A673 (cell line): ENCODE measurements at regions of chr11 and their contacts with region 1.

Region 1: DNA sequence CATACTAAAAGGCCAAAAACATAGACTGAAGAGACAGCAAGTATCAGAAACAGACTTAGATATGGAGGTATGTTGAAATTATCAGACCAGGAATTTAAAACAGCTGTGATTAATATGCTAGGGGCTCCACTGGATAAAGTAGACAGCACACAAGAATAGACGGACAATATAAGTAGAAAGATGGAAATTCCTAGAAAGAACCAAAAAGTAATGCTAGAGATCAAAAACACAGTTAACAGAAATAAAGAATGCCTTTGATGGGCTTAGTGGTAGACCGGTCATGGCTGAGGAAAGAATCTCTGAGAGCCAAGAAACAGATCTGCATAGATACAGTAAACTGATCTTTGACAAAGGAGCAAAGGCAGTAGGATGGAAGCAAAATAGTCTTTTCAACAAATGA is 250.2 kb downstream of the SWAP70 start:
- DNase-seq: no peak
- H3K4me3 ChIP-seq: no peak overlapping the region
- H3K27ac ChIP-seq: no peak overlapping the region
- H3K4me1 ChIP-seq: no peaks in the 10 kb centered on the region
- H3K27me3 ChIP-seq: no peaks in the 10 kb centered on the region
- CTCF ChIP-seq: no peak

Region 2: DNA sequence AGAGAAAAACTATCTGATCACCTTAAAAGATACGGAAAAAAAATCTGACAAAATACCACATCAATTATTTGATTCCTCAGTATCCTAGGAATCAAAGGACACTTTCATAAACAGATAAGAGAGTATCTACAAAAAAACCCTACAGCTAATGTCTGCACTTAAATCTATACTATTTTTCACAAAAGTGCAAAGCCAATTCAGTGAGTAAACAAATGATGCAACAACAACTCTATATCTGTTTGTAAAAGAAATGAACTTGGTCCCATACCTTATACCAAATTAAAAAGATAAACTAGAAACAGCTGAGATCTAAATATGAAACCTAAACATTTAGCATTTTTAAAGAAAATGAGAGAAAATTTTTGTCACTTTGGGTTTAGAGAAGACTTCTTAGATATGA is 13.6 kb after region 1 on chr11:
- CTCF ChIA-PET with region 1: no interaction called
- POLR2A ChIA-PET with region 1: no interaction called
- intact Hi-C with region 1: loop called (anchors 2 kb)
- DNase-seq: no peak
- H3K4me3 ChIP-seq: no peak overlapping the region
- H3K27ac ChIP-seq: no peak overlapping the region
- H3K4me1 ChIP-seq: peaks cover 14% of the 10 kb centered on the region
- H3K27me3 ChIP-seq: no peaks in the 10 kb centered on the region
- CTCF ChIP-seq: no peak

Region 3: GRCh38 chr11:10004526-10005113 is 90.6 kb after region 1 on chr11:
- CTCF ChIA-PET with region 1: no interaction called
- POLR2A ChIA-PET with region 1: no interaction called
- intact Hi-C with region 1: no loop called
- DNase-seq: no peak
- H3K4me3 ChIP-seq: no peak overlapping the region
- H3K27ac ChIP-seq: no peak overlapping the region
- H3K4me1 ChIP-seq: no peaks in the 10 kb centered on the region
- H3K27me3 ChIP-seq: no peaks in the 10 kb centered on the region
- CTCF ChIP-seq: no peak